Aorta (tissue), 5 donors: ENCODE measurements at regions of chr11 and their contacts with region 1.

Region 1: GRCh38 chr11:77473801-77474683 is at the start of gene PAK1:
- DNase-seq: peak; percentile 89 to 97
- ATAC-seq: peak; percentile 85
- H3K4me3 ChIP-seq: peak within 1 kb of the TSS; percentile 39 to 55
- H3K27ac ChIP-seq: no peak within 1 kb of the TSS
- H3K4me1 ChIP-seq: no peaks in the 10 kb centered on the region
- H3K27me3 ChIP-seq: no peaks in the 10 kb centered on the region
- total RNA-seq, gene PAK1: 27.0 to 42.6 TPM

Region 2: DNA sequence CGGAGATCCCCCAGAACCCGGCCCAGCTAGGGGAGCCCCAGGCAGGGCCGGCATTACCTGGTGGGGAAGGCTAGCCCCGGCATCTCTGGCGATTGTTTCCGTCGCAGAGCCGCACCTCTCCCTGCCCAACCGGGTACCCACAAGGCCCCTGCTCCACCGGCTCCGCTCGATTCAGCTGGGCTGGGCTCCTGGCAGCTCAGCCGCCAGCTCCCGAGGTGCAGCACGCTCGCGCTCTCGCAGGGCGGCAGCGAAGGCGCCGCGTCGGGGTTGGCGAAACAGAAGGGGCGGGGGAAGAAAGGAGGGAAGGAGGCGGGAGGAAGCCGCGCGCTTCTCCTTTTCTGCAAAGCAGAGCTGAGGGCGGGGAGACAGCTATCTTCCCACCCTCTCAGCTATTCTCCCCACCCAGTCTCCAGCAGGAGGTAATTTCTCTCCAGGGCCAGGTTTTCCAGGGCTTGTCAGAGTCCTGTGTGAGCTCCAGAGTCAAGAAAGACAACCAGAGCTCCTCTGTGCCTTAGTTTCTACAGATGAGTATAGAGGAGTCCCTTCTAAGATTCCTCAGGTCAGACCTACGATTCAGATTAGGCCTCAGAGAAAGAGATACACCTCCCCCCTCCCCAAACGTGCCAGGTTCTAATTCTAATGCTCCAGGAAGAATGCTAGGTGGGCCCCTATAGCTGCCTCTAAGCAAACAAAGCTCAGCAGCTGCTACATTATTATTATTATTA is 62.2 kb before region 1 on chr11:
- intact Hi-C with region 1: loop called in 1 of 2 experiments (anchors 5 kb)
- DNase-seq: peak; percentile 93 to 96
- ATAC-seq: peak; percentile 96
- H3K4me3 ChIP-seq: peak overlapping the region; percentile 56 to 83
- H3K27ac ChIP-seq: peak overlapping the region in 1 of 2 donors; percentile 67
- H3K4me1 ChIP-seq: peaks cover 0 to 9% of the 10 kb centered on the region in 2 donors
- H3K27me3 ChIP-seq: no peaks in the 10 kb centered on the region